GM10248 (cell line): ENCODE measurements at regions of chr1 and their contacts with region 1.

Region 1: GRCh38 chr1:162633081-162633762 is 958 bp downstream of the DDR2 start:
- DNase-seq: peak; percentile 23
- CTCF ChIP-seq: no peak

Region 2: GRCh38 chr1:162497723-162498500 is 135.3 kb before region 1 on chr1 and contains the start of gene UHMK1:
- CTCF ChIA-PET with region 1: no interaction called
- POLR2A ChIA-PET with region 1: no interaction called
- DNase-seq: peak; percentile 93
- CTCF ChIP-seq: no peak

Region 3: GRCh38 chr1:162649583-162649982 is 16.4 kb after region 1 on chr1:
- CTCF ChIA-PET with region 1: interaction called, 12 read pairs
- POLR2A ChIA-PET with region 1: no interaction called
- DNase-seq: no peak
- CTCF ChIP-seq: no peak